ENCODE measurements at regions of chr12 and their contacts with region 1.

Region 1: DNA sequence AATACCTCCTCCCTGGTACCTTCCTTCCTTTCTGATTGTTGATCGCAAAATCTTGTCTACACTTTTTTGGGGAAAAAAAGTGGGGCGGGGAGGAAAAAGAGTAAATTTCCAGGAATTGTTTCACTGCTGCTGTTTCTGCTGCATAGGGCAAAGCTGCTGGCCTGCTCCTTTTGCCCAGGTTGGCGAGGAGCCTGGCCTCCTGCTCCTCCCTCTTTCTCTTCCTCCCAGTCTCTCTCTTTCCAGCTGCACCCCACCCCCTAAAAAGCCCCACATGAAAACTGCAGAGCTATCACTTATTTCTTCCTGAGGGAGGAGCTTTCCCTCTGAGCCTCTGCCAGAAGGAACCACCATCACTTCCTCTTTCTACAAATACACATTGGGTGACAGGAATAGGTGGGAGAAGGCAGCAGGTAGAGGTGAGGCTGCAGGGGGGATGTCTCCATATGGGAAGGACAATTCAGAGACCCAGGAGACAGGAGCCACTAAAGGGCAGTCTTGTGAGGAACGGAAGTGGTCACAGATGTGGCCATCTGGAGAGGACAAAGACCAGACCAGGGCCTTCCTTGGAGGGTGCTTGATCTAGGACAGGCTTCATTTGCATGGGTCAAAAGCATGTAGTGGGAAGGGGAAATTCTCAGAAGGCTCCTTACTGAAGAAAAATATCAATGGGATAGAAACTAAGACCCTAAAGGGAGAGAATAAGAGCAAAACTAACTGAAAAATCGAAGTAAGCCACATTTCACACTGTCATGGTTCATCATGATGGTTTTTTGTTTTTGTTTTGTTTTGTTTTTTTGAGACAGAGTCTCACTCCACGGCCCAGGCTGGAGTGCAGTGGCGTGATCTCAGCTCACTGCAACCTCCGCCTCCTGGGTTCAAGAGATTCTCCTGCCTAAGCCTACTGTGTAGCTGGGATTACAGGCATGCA is 14.8 kb downstream of the ZBTB39 start:
- DNase-seq: peak in 1 of 4 donors; percentile 51
- ATAC-seq: no peak
- H3K4me3 ChIP-seq: no peak overlapping the region
- H3K27ac ChIP-seq: peak overlapping the region in 1 of 4 donors; percentile 26
- H3K4me1 ChIP-seq: no peaks in the 10 kb centered on the region
- H3K27me3 ChIP-seq: no peaks in the 10 kb centered on the region
- CTCF ChIP-seq: no peak
- POLR2A ChIP-seq: no peak

Region 2: GRCh38 chr12:56763753-56764657 is 227.6 kb before region 1 on chr12:
- intact Hi-C with region 1: loop called (anchors 5 kb)
- DNase-seq: no peak
- ATAC-seq: no peak
- H3K4me3 ChIP-seq: no peak overlapping the region
- H3K27ac ChIP-seq: no peak overlapping the region
- H3K4me1 ChIP-seq: peaks cover 20% of the 10 kb centered on the region
- H3K27me3 ChIP-seq: no peaks in the 10 kb centered on the region
- CTCF ChIP-seq: no peak
- POLR2A ChIP-seq: no peak

Region 3: GRCh38 chr12:56941299-56942017 is 50.1 kb before region 1 on chr12:
- intact Hi-C with region 1: no loop called
- DNase-seq: peak in 1 of 4 donors; percentile 36
- ATAC-seq: no peak
- H3K4me3 ChIP-seq: no peak overlapping the region
- H3K27ac ChIP-seq: no peak overlapping the region
- H3K4me1 ChIP-seq: no peaks in the 10 kb centered on the region
- H3K27me3 ChIP-seq: no peaks in the 10 kb centered on the region
- CTCF ChIP-seq: no peak
- POLR2A ChIP-seq: no peak

Measured in body of pancreas (tissue), 4 donors.